Activated naive CD4-positive, alpha-beta T cell treated with anti-CD3 and anti-CD28 coated beads for 36 hours (primary cell): ENCODE measurements at regions of chr16 and their contacts with region 1.

Region 1: DNA sequence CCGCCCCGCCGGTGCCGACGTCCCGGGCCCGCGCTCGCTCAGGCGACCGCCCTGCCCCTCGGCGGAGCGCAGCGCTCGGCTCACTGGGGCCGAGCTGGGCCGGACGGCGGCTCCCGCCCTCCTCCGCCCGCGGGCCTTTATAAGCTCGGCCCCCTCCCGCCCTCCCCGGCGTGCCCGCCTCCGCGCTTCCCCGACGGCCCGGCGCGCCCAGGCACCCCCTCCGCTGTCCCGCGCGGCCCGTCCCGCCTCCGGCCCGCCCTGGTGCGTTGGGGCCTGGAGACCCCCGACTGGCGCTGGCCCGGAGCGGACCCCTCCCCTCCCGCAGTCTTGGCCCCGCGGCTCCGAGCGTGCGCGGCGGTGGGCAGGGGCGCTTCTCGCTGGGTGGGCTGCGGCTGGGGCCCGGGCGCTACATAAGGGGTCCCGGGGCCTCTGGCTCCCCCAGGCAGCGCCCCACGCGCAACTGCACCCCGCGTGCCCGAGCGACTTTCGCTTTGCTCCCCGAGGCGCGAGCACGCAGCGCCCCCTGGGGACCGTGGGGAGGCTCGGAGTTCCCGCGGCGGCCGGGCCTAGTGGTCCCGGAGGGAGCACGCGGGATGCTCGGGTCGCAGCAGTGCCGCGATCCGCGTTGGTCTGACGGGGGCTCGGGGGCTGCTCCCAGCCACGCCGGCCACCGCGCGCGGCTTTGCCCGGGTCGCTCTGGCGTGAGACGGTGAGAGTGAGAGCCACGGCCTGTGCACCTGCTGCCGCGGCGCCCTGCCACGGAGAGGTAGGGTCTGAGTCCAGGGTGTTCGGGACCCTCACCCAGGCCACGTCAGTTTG is at the start of gene PIEZO1:
- DNase-seq: peak; percentile 77
- H3K4me3 Mint-ChIP-seq: peak within 1 kb of the TSS; percentile 65
- H3K27ac Mint-ChIP-seq: peak within 1 kb of the TSS; percentile 78
- H3K4me1 Mint-ChIP-seq: peaks cover 42% of the 10 kb centered on the region
- H3K27me3 Mint-ChIP-seq: no peaks in the 10 kb centered on the region
- total RNA-seq, gene PIEZO1: 78.2 to 80.1 TPM

Region 2: DNA sequence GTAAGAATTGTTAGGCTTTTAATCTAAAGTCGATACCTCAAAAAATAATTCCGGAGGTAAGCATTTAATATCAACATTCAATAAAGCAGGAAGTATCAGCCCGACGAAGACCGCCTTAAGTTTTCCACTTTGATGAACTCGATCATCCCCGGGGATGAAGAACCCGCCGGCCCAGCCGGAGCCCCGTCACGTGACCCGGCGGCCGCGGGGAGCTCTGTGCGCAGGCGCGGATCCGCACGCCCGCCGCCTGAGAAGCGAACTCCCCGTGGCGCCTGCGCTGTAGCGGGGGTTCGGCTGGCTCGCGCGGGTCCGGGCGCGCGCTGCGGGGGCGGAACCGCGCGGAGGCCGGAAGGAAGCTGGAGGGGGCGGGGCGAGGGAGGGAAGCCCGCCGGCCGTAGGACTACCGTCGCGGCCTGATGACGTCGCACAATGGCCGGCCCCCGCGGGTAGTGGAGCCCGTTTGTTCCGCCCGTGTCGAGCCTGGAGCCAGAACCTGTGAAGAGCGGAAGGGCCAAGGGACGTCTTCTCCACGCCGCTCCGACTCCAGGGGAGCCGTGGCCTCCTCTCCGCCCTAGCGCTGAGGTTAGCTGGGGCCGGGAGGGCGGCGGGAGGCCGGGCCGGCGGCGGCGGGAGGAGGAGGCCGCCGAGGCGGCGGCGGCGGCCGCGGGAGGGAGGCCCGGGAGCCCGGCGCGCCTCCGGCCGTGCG is 215.2 kb before region 1 on chr16 and contains the start of gene ZC3H18:
- CTCF ChIA-PET with region 1: no interaction called
- intact Hi-C with region 1: loop called (anchors 10 kb)
- DNase-seq: peak; percentile 97
- H3K4me3 Mint-ChIP-seq: peak within 1 kb of the TSS; percentile 81
- H3K27ac Mint-ChIP-seq: peak within 1 kb of the TSS; percentile 84
- H3K4me1 Mint-ChIP-seq: peaks cover 41% of the 10 kb centered on the region
- H3K27me3 Mint-ChIP-seq: no peaks in the 10 kb centered on the region
- total RNA-seq, gene ZC3H18: 55.8 to 58.5 TPM

Region 3: GRCh38 chr16:88686439-88687253 is 98.7 kb before region 1 on chr16 and contains the start of gene SNAI3:
- CTCF ChIA-PET with region 1: interaction called, 3 read pairs
- intact Hi-C with region 1: loop called (anchors 2 kb)
- DNase-seq: peak; percentile 86
- H3K4me3 Mint-ChIP-seq: peak within 1 kb of the TSS; percentile 71
- H3K27ac Mint-ChIP-seq: no peak within 1 kb of the TSS
- H3K4me1 Mint-ChIP-seq: peaks cover 45% of the 10 kb centered on the region
- H3K27me3 Mint-ChIP-seq: no peaks in the 10 kb centered on the region
- total RNA-seq, gene SNAI3: 2.9 to 3.0 TPM

Region 4: DNA sequence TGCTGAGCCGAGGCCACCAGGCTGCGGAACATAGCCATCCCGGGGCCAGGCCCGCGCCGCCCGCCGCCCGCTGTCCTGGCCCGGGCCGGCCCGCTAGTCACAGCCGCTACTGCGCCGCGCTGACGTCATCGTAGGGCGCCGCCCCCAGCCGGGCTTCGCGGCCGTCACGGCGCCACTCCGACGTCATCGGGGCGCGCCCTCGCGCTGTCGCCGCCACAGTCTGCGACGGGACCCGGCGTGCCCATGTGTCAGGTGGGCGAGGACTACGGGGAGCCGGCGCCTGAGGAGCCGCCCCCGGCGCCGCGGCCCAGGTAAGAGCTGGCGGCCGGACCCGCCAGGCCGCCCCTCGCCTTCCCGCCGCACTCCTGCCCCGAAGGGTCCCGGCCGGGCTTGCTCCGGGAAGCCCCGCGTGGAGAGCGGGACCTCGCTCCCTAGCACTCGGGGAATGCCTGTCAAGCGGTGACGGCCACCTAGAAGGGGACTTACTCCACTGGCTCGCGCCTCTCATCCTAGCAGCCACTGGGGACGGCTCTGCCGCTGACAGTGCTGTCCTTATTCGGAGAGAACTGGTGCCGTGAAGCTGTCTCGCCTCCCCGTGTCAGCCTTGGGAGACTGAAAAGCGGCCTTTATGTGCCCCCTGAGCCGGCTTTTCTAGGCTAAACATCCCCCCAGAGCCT is 78.9 kb before region 1 on chr16 and contains the starts of genes CTU2 and RNF166:
- CTCF ChIA-PET with region 1: interaction called, 5 read pairs
- intact Hi-C with region 1: loop called (anchors 1 kb)
- DNase-seq: peak; percentile 92
- H3K4me3 Mint-ChIP-seq: peak within 1 kb of the TSS; percentile 84
- H3K27ac Mint-ChIP-seq: peak within 1 kb of the TSS; percentile 77
- H3K4me1 Mint-ChIP-seq: peaks cover 60% of the 10 kb centered on the region
- H3K27me3 Mint-ChIP-seq: no peaks in the 10 kb centered on the region
- total RNA-seq, gene CTU2: 46.1 to 48.1 TPM
- total RNA-seq, gene RNF166: 33.6 to 35.3 TPM

Region 5: DNA sequence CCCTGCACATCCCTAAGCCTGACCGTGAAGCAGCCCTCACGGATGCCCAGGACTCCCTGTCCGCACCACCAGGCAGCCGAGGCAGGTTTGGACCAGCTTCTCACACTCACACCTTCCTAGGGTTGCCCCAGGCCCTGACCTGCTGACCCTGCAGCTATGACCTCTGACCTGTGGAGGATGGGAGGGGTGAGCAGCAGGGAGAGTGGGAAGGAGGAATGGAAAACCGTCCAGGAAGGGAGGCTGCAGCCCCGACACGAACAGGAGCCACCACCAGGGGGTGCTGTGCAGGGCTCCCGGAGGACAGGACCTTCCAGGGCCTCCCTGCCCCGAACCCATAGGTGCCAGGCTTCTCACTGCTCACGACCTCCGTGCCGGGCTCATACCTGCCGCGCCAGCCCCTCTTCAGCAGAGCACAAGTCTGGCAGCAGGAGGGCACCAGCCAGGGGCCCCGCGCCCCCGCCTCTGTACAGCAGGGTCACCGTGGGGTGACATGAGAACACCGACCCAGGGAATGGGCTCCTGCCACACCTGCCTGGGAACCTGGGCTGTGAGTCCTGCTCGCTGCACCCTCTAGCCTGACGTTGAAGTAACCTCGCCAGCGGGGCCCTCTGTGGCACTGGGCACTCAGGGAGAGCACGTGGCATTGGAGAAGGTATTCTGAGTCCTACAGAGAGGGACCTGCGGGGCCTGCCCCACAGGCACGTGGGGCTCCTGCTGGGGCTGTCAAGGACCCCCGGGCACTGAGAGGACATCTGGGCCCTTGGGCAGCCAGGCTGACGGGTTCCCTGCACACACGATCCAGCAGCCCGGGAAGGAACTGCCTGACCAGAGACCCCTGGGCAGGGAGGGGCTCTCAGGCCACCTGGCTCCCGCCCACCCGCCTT is 41.4 kb before region 1 on chr16:
- CTCF ChIA-PET with region 1: interaction called, 35 read pairs
- intact Hi-C with region 1: loop called (anchors 1 kb)
- DNase-seq: peak; percentile 80
- H3K4me3 Mint-ChIP-seq: no peak overlapping the region
- H3K27ac Mint-ChIP-seq: no peak overlapping the region
- H3K4me1 Mint-ChIP-seq: peaks cover 33% of the 10 kb centered on the region
- H3K27me3 Mint-ChIP-seq: no peaks in the 10 kb centered on the region

Region 6: GRCh38 chr16:88811769-88812512 is 26.6 kb after region 1 on chr16 and contains the start of gene APRT:
- CTCF ChIA-PET with region 1: interaction called, 7 read pairs
- intact Hi-C with region 1: loop called (anchors 1 kb)
- DNase-seq: peak; percentile 97
- H3K4me3 Mint-ChIP-seq: peak within 1 kb of the TSS; percentile 97
- H3K27ac Mint-ChIP-seq: peak within 1 kb of the TSS; percentile 97
- H3K4me1 Mint-ChIP-seq: peaks cover 27% of the 10 kb centered on the region
- H3K27me3 Mint-ChIP-seq: no peaks in the 10 kb centered on the region
- total RNA-seq, gene APRT: 314 TPM

Region 7: GRCh38 chr16:88914750-88915368 is 129.5 kb after region 1 on chr16:
- CTCF ChIA-PET with region 1: no interaction called
- intact Hi-C with region 1: no loop called
- DNase-seq: no peak
- H3K4me3 Mint-ChIP-seq: no peak overlapping the region
- H3K27ac Mint-ChIP-seq: no peak overlapping the region
- H3K4me1 Mint-ChIP-seq: no peaks in the 10 kb centered on the region
- H3K27me3 Mint-ChIP-seq: no peaks in the 10 kb centered on the region

Region 8: DNA sequence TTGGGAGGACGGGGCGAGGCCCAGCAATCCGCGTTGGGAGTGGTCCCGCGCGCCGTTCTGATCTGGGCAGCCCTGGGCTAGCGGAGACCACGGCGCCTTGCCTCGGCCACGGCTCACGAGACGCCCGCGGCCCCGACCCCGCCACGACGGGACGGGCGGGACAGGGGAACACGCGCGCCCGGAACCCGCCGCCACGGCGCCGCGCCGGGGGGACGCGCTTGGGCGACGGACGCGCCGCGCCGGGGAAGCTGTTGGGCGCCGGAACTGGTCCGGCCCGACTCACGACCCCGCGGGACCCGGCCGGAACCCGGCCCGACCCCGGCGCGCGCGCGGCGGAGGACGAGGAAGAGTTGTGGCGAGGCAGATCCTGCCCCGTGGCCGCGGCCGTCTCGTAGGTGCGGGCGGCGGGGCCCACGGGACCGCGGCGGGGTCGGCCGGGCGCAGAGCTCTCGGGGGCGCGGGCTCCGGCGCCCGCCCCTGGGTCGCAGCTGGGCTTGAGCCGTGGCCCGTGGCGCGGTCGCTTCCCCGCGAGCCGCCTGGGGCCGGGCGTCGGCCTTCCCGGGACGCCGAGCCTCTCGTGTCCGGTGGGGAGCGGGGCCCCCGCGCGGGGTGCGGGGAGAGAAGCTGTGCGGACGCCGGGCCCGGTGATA is 308.4 kb after region 1 on chr16 and contains the start of gene ACSF3:
- CTCF ChIA-PET with region 1: no interaction called
- intact Hi-C with region 1: loop called (anchors 10 kb)
- DNase-seq: peak; percentile 63
- H3K4me3 Mint-ChIP-seq: peak within 1 kb of the TSS; percentile 92
- H3K27ac Mint-ChIP-seq: peak within 1 kb of the TSS; percentile 92
- H3K4me1 Mint-ChIP-seq: peaks cover 47% of the 10 kb centered on the region
- H3K27me3 Mint-ChIP-seq: no peaks in the 10 kb centered on the region
- total RNA-seq, gene ACSF3: 26.1 to 26.7 TPM